Sigmoid colon (tissue), 7 donors: ENCODE measurements at regions of chr11 and their contacts with region 1.

Region 1: GRCh38 chr11:128503245-128503991 is 83.9 kb downstream of the ETS1 start:
- DNase-seq: no peak
- H3K4me3 ChIP-seq: no peak overlapping the region
- H3K27ac ChIP-seq: peak overlapping the region; percentile 44 to 87 (median 56)
- H3K4me1 ChIP-seq: peaks cover 0 to 88% (median 79%) of the 10 kb centered on the region in 4 donors
- H3K27me3 ChIP-seq: no peaks in the 10 kb centered on the region
- CTCF ChIP-seq: no peak
- EP300 ChIP-seq: no peak
- POLR2A ChIP-seq: no peak

Region 2: GRCh38 chr11:127136438-127136837 is 1367.0 kb before region 1 on chr11:
- intact Hi-C with region 1: no loop called
- DNase-seq: no peak
- H3K4me3 ChIP-seq: no peak overlapping the region
- H3K27ac ChIP-seq: no peak overlapping the region
- H3K4me1 ChIP-seq: no peaks in the 10 kb centered on the region
- H3K27me3 ChIP-seq: no peaks in the 10 kb centered on the region
- CTCF ChIP-seq: no peak
- EP300 ChIP-seq: no peak
- POLR2A ChIP-seq: no peak

Region 3: GRCh38 chr11:128026596-128026995 is 476.8 kb before region 1 on chr11:
- intact Hi-C with region 1: no loop called
- DNase-seq: no peak
- H3K4me3 ChIP-seq: no peak overlapping the region
- H3K27ac ChIP-seq: no peak overlapping the region
- H3K4me1 ChIP-seq: no peaks in the 10 kb centered on the region
- H3K27me3 ChIP-seq: peaks cover 0 to 4% (median 0%) of the 10 kb centered on the region in 3 donors
- CTCF ChIP-seq: no peak
- EP300 ChIP-seq: no peak
- POLR2A ChIP-seq: no peak

Region 4: GRCh38 chr11:128399251-128400121 is 103.9 kb before region 1 on chr11:
- intact Hi-C with region 1: loop called (anchors 5 kb)
- DNase-seq: no peak
- H3K4me3 ChIP-seq: no peak overlapping the region
- H3K27ac ChIP-seq: peak overlapping the region in 2 of 4 donors; percentile 68 to 70
- H3K4me1 ChIP-seq: peaks cover 0 to 43% (median 36%) of the 10 kb centered on the region in 4 donors
- H3K27me3 ChIP-seq: no peaks in the 10 kb centered on the region
- CTCF ChIP-seq: no peak
- EP300 ChIP-seq: no peak
- POLR2A ChIP-seq: no peak

Region 5: DNA sequence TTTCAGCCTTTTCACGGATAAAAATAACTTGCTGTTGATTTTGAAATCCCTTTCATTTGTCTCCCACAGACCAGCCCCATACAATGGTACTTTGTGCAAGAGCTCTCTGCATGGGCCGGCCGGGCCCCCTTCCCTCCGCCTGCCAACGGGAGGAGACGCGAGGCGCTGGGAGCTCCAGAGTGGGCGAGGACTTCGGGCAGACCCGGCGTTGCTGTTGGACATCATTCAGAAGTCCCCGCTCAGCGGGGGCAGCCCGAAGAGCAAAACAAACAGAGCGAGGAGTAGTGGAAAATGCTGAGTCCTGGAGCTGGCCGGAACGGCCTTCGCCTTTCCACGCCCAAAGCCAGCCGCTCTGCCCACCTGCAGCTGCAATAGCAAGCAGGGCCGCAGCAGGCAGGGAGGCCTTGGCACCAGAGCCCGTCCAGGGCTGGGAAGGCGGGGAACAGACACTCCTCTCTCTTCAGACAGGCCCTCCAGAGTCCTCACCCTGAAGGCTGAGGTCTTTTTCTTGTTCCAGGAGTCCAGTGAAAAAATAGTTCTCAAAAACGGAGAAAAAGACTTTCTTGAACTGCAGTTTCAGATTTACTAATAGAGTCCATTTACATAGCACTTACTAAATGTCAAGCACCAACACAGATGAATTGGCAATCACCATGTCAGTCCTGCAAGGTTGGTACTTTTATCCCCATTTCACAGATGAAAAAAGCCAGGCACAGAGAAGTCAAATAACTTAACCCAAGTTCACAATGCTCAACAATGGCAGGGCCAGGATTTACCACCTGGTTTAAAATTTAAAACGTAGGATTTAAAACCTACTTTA is 51.6 kb before region 1 on chr11:
- intact Hi-C with region 1: no loop called
- DNase-seq: peak; percentile 81
- H3K4me3 ChIP-seq: peak overlapping the region in 2 of 4 donors; percentile 19 to 26
- H3K27ac ChIP-seq: peak overlapping the region; percentile 24 to 56 (median 34)
- H3K4me1 ChIP-seq: peaks cover 0 to 28% (median 21%) of the 10 kb centered on the region in 4 donors
- H3K27me3 ChIP-seq: no peaks in the 10 kb centered on the region
- CTCF ChIP-seq: no peak
- EP300 ChIP-seq: no peak
- POLR2A ChIP-seq: no peak